Activated B cell treated with CpG ODN at 0.5 μM for 24 hours (primary cell): ENCODE measurements at regions of chr2 and their contacts with region 1.

Region 1: DNA sequence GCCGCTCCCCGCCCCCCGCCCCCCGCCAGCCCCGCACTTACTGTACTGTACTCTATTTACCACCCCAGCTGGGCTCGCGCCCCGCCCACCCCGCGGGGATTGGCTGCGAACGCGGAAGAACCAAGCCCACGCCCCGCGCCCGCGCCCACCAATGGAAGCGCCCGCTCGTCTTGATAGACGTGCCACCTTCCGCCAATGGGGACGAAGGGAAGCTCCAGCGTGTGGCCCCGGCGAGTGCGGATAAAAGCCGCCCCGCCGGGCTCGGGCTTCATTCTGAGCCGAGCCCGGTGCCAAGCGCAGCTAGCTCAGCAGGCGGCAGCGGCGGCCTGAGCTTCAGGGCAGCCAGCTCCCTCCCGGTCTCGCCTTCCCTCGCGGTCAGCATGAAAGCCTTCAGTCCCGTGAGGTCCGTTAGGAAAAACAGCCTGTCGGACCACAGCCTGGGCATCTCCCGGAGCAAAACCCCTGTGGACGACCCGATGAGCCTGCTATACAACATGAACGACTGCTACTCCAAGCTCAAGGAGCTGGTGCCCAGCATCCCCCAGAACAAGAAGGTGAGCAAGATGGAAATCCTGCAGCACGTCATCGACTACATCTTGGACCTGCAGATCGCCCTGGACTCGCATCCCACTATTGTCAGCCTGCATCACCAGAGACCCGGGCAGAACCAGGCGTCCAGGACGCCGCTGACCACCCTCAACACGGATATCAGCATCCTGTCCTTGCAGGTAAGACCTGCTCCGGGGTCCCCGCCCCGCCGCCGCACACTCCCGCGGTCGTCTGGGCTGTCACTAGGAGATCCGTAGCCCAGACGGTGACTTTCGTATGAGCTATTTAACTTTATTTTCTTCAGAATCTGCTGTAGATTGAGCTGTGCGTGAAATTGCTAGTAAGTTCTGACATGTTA is at the start of gene ID2:
- DNase-seq: peak; percentile 81
- ATAC-seq: peak; percentile 87
- H3K4me3 Mint-ChIP-seq: peak within 1 kb of the TSS; percentile 85
- H3K27ac Mint-ChIP-seq: no peak within 1 kb of the TSS
- H3K4me1 Mint-ChIP-seq: peaks cover 54% of the 10 kb centered on the region
- H3K27me3 Mint-ChIP-seq: peaks cover 57% of the 10 kb centered on the region
- CTCF ChIP-seq: no peak
- total RNA-seq, gene ID2: 6.4 and 8.1 TPM in 2 replicates

Region 2: DNA sequence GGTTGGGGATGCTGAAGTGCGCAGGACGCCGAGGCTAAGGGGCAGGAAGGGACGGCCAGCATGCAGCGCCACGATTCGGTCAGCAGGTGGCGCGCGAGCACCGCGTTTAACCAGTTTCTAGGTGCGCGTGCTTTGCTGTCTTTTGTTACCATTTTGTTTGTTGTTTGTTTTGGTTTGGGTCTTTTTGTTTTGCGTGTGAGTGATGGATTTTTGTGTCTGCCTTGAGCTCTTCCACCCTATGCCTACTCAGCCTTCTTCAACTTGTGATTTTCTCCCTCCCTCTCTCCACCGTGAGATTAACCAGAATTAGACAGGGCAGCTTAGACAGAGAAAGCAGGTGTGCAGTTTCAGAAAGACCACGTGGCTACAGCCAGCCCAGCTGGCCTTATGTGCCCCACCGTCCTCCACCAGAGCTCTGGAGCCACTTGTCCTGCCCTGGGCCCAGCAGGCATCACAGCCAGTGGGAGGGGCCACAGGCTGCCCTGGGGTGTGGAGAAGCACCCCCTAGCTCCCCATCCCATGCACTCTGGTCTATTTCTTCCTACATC is 1584.6 kb before region 1 on chr2:
- CTCF ChIA-PET with region 1: interaction called, 12 read pairs
- POLR2A ChIA-PET with region 1: no interaction called
- intact Hi-C with region 1: loop called (anchors 1 kb)
- DNase-seq: peak; percentile 58
- ATAC-seq: peak; percentile 81
- H3K4me3 Mint-ChIP-seq: peak overlapping the region; percentile 33
- H3K27ac Mint-ChIP-seq: no peak overlapping the region
- H3K4me1 Mint-ChIP-seq: peaks cover 11% of the 10 kb centered on the region
- H3K27me3 Mint-ChIP-seq: peaks cover 23% of the 10 kb centered on the region
- CTCF ChIP-seq: peak; percentile 84

Region 3: DNA sequence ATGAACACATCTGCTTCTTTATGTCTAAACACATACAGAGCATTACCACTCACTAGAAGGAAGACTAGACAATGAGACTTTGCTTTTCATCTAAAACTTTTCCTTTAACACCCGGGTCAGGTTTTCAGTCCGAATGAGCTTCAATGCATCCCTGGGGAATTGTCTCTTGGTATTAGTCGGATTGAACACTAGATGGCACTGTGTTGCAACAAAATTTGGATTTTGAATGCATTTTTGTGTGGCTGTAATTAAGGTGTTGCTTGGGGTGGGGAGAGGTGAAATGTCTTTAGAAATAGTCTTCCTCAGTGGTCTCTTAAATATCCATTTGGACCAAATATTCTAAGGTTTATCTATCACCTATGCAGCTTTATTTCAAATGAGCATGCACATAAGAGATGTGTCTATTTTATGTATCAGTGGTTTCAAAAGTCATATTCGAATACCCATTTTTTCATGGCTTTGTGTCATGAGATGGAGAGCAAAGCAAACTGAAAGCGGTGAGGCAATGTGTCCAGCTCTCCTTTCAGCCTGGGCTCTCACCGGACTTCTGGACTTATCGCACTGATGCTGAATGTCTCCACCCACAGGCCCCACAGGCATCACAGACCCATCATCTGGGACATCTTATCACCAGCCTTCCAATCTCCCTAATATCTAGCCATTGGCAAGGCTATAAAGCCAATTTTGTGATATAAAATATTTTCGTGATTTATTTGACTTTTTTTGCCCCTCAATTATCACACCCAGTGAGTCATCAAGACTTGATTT is 1254.6 kb before region 1 on chr2:
- CTCF ChIA-PET with region 1: interaction called, 21 read pairs
- POLR2A ChIA-PET with region 1: no interaction called
- intact Hi-C with region 1: loop called (anchors 1 kb)
- DNase-seq: no peak
- ATAC-seq: peak; percentile 40
- H3K4me3 Mint-ChIP-seq: no peak overlapping the region
- H3K27ac Mint-ChIP-seq: no peak overlapping the region
- H3K4me1 Mint-ChIP-seq: peaks cover 7% of the 10 kb centered on the region
- H3K27me3 Mint-ChIP-seq: peaks cover 47% of the 10 kb centered on the region
- CTCF ChIP-seq: peak; percentile 19

Region 4: GRCh38 chr2:8000870-8001269 is 681.2 kb before region 1 on chr2:
- CTCF ChIA-PET with region 1: no interaction called
- POLR2A ChIA-PET with region 1: no interaction called
- intact Hi-C with region 1: loop called (anchors 1 kb)
- DNase-seq: no peak
- ATAC-seq: no peak
- H3K4me3 Mint-ChIP-seq: no peak overlapping the region
- H3K27ac Mint-ChIP-seq: no peak overlapping the region
- H3K4me1 Mint-ChIP-seq: no peaks in the 10 kb centered on the region
- H3K27me3 Mint-ChIP-seq: no peaks in the 10 kb centered on the region
- CTCF ChIP-seq: no peak

Region 5: DNA sequence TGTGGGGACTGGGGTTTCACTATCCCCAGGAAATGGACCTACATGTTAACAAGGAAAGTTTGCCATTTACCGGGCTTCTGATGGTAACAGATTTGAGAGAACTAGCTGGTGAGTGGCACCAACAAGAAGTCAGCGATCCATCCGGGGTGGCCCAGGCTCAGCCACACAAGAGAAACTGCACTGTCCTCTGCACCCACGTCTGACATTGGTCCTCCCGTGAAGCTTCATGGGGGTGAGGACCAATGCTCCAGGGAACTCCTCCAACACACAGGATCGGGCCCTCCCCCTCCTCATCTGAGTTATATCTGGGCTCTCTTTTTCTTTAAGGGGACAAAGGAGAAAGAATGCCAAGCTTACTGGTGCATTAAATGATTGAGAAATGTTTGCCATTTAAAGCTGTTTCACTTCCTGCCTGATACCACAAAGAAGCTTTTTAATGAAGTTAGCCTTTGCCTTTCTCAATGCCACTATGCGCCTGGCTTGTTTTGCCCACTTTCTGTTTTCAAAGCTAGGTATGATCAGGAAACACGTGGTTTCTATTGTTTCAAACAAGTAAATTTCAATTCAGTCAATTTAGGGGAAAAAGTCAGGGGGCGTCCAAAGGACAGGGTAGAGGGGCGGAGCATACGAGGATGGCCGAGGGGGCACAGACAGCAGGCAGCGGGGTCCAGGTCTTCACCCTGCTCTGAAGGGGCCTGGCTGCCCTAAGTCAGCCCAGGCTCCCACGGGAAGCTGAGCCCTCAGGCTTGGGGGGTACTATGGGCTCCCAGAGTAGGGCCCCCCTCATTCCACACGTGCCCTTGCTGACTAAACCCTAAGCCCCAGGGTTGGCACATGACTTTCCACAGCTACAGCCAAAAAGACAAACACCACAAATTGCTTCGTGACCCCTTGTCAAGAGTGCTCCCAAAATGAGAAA is 204.2 kb before region 1 on chr2:
- CTCF ChIA-PET with region 1: interaction called, 3 read pairs
- POLR2A ChIA-PET with region 1: interaction called, 5 read pairs
- intact Hi-C with region 1: loop called (anchors 2 kb)
- DNase-seq: peak; percentile 34
- ATAC-seq: peak; percentile 70
- H3K4me3 Mint-ChIP-seq: peak overlapping the region; percentile 71
- H3K27ac Mint-ChIP-seq: peak overlapping the region; percentile 89
- H3K4me1 Mint-ChIP-seq: peaks cover 59% of the 10 kb centered on the region
- H3K27me3 Mint-ChIP-seq: peaks cover 63% of the 10 kb centered on the region
- CTCF ChIP-seq: no peak

Region 6: GRCh38 chr2:8583400-8584173 is 98.5 kb before region 1 on chr2:
- CTCF ChIA-PET with region 1: no interaction called
- POLR2A ChIA-PET with region 1: interaction called, 3 read pairs
- intact Hi-C with region 1: loop called (anchors 2 kb)
- DNase-seq: peak; percentile 80
- ATAC-seq: peak; percentile 94
- H3K4me3 Mint-ChIP-seq: peak overlapping the region; percentile 64
- H3K27ac Mint-ChIP-seq: peak overlapping the region; percentile 27
- H3K4me1 Mint-ChIP-seq: peaks cover 47% of the 10 kb centered on the region
- H3K27me3 Mint-ChIP-seq: peaks cover 18% of the 10 kb centered on the region
- CTCF ChIP-seq: no peak

Region 7: GRCh38 chr2:8693155-8693821 is 11.2 kb after region 1 on chr2:
- CTCF ChIA-PET with region 1: no interaction called
- POLR2A ChIA-PET with region 1: no interaction called
- intact Hi-C with region 1: no loop called
- DNase-seq: no peak
- ATAC-seq: no peak
- H3K4me3 Mint-ChIP-seq: no peak overlapping the region
- H3K27ac Mint-ChIP-seq: no peak overlapping the region
- H3K4me1 Mint-ChIP-seq: no peaks in the 10 kb centered on the region
- H3K27me3 Mint-ChIP-seq: peaks cover 32% of the 10 kb centered on the region
- CTCF ChIP-seq: no peak